Esophagus muscularis mucosa (tissue), 4 donors: ENCODE measurements at regions of chr9 and their contacts with region 1.

Region 1: GRCh38 chr9:90914868-90915483 is 113.4 kb downstream of the SYK start:
- DNase-seq: no peak
- H3K4me3 ChIP-seq: no peak overlapping the region
- H3K27ac ChIP-seq: no peak overlapping the region
- H3K4me1 ChIP-seq: peaks cover 0 to 4% (median 2%) of the 10 kb centered on the region in 4 donors
- H3K27me3 ChIP-seq: peaks cover 0 to 12% (median 0%) of the 10 kb centered on the region in 4 donors
- CTCF ChIP-seq: peak; percentile 89 to 92 (median 91)
- EP300 ChIP-seq: no peak
- POLR2A ChIP-seq: no peak

Region 2: DNA sequence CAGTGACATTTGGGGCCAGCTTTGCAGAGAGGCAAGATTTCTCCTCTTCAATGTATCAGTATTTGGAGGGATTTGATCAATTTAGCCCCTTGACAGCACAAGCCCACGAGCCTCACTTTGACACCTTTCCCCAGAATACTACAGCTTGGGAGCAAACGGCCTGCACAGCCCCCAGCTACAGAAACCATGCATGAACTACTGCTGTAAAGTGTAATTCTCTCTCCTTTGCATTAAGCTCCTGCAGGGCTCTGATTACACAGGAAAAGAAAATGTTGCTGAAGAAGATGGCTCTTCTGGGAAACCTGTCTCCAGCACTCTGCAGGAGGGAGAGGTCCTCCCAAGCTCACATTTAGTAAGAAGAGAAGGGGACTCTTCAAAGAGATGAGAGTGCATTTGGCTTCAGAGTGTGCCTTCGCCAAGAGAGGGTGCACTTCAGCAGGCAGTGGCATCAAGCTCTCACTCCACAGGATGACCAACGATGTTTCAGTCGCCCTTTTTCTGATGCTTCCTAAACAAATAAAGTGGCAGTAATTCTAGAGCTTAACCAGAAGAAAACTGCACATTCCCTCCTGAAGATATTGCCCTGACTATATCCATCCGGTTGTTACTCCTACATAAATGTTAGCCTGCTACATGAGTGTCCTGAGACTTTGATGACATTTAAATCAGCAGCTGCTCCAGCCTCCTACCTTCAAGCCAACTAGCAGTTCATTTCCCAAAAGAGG is 174.6 kb after region 1 on chr9:
- intact Hi-C with region 1: loop called (anchors 10 kb)
- DNase-seq: no peak
- H3K4me3 ChIP-seq: no peak overlapping the region
- H3K27ac ChIP-seq: no peak overlapping the region
- H3K4me1 ChIP-seq: peaks cover 0 to 8% (median 3%) of the 10 kb centered on the region in 4 donors
- H3K27me3 ChIP-seq: no peaks in the 10 kb centered on the region
- CTCF ChIP-seq: peak; percentile 54 to 62 (median 59)
- EP300 ChIP-seq: no peak
- POLR2A ChIP-seq: no peak

Region 3: GRCh38 chr9:91433180-91433579 is 518.2 kb after region 1 on chr9:
- intact Hi-C with region 1: loop called (anchors 2 kb)
- DNase-seq: no peak
- H3K4me3 ChIP-seq: no peak overlapping the region
- H3K27ac ChIP-seq: no peak overlapping the region
- H3K4me1 ChIP-seq: peaks cover 0 to 9% (median 3%) of the 10 kb centered on the region in 4 donors
- H3K27me3 ChIP-seq: no peaks in the 10 kb centered on the region
- CTCF ChIP-seq: peak; percentile 51 to 62 (median 60)
- EP300 ChIP-seq: no peak
- POLR2A ChIP-seq: no peak

Region 4: DNA sequence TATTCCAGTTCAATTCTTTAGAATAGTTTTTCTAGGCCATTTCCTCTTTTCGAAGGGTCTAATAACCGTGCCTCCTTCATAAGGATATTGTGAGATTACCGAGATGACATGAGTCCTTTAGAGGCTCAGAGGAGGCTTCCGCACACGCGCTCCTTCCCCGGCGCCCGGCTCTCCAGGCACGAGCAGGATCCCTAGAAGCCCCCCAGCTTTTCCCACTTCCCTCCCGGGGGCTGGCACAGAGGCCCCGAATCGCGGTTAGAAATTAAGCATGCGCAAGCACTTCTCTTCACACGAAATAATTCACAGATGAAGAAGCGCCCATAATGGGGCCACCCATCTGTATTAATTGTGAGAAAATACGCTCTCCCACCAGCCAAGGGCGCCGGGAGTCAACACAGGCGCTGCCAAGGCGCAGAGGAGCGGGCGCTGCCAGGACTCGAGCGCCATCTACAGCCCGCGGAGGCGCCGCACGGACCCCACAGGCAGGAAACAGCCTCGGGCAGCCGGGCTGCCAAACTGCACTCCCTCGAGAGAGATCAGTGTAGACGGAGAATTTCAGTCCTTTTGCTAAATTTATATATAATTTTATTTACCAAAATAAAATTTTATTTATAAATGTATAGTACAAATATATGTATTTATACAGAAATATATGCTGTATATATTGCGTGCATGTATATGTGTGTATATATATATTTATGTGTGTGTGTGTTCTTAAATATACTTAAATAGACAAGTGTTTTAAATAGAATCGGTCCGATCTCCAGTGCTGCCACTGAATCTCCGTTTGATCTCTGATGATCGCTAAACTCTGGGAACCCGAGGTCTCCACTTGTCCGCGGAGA is 766.7 kb after region 1 on chr9:
- intact Hi-C with region 1: loop called (anchors 2 kb)
- DNase-seq: peak; percentile 92
- H3K4me3 ChIP-seq: peak overlapping the region in 3 of 4 donors; percentile 3 to 18 (median 15)
- H3K27ac ChIP-seq: no peak overlapping the region
- H3K4me1 ChIP-seq: peaks cover 0 to 8% (median 5%) of the 10 kb centered on the region in 4 donors
- H3K27me3 ChIP-seq: no peaks in the 10 kb centered on the region
- CTCF ChIP-seq: peak; percentile 82 to 93 (median 85)
- EP300 ChIP-seq: no peak
- POLR2A ChIP-seq: no peak

Region 5: GRCh38 chr9:91727316-91727861 is 812.4 kb after region 1 on chr9:
- intact Hi-C with region 1: loop called (anchors 2 kb)
- DNase-seq: no peak
- H3K4me3 ChIP-seq: no peak overlapping the region
- H3K27ac ChIP-seq: peak overlapping the region; percentile 43 to 67 (median 50)
- H3K4me1 ChIP-seq: peaks cover 8 to 30% (median 24%) of the 10 kb centered on the region in 4 donors
- H3K27me3 ChIP-seq: no peaks in the 10 kb centered on the region
- CTCF ChIP-seq: peak; percentile 69 to 79 (median 71)
- EP300 ChIP-seq: no peak
- POLR2A ChIP-seq: no peak